ENCODE measurements at regions of chr22 and their contacts with region 1.

Region 1: DNA sequence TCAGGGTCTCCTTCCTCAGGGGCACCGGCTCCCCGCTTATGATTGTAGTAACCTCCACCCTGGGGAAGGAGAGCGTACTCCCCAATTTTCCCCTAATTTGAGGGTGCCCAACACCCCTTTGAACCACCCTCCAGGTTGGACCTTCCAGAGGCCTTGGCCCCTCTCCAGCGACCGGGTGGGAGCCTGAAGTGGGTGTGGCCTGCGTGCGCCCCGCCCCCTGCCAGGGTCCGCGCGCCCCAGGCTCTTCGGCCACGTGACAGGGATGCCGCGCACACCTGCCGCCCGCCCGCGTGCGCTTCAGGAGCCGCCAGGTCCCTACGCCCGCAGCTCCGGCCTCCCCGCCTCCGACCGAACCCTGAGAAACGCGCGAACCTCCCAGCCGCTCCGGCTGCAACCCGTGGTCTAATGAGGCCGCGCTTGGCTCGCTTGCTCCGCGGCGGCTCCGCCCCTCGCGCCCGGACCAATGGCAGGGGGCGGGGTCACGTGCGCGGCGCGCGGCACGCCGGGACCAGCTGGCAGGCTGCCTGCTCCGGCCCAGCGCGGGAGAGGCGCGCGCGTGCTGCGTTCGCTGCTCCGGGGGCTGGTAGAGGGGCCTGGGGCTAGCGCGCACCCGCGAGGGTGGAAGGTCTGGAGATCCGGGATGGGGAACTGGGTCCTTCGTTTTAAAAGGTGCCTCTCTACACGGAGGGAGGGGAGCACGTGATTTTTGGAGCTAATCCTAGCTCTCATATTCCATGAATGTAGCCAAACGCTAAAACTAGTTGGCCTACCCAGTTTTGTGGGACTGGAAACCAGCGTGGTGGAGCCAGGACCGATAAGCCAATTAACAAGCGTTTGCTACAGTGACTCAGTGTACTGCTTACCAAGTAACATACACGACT is at the start of gene FOXRED2:
- DNase-seq: peak; percentile 78 to 96 (median 86)
- ATAC-seq: peak; percentile 96
- H3K4me3 ChIP-seq: peak within 1 kb of the TSS; percentile 56
- H3K4me3 Mint-ChIP-seq: peak within 1 kb of the TSS; percentile 73
- H3K27ac ChIP-seq: peak within 1 kb of the TSS; percentile 18 to 48
- H3K27ac Mint-ChIP-seq: peak within 1 kb of the TSS; percentile 18
- H3K4me1 ChIP-seq: peaks cover 15% of the 10 kb centered on the region
- H3K4me1 Mint-ChIP-seq: peaks cover 12% of the 10 kb centered on the region
- H3K27me3 ChIP-seq: no peaks in the 10 kb centered on the region
- H3K27me3 Mint-ChIP-seq: no peaks in the 10 kb centered on the region
- CTCF ChIP-seq: no peak
- total RNA-seq, gene FOXRED2: 1.8 to 2.3 TPM

Region 2: DNA sequence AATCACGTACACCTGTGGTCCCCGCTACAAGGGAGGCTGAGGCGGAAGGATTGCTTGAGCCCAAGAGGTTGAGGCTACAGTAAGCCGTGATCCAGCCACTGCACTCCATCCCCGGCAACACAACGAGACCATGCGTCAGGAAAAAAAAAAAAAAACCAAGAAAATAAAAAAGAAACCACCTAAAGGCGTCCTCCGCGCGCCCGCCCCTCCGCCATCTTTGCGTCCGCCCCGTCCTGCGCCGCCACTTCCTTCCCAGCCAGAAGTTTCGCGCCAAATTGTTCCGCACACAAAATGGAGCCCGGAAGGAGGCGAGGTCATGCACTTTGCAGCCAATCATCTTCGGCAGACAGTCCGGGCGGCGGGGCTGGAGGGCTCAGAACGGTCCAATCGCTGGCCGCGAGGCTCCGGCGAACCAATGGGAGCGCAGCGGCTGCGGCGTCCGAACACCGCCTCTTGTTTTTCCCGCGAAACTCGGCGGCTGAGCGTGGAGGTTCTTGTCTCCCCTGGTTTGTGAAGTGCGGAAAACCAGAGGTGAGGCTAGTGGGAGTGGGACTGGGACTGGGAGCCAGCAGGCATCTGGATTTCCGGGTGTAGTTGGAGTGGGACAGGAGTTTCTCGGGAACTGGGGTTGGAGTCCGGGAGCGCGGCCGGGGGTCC is 1107.1 kb before region 1 on chr22 and contains the start of gene MCM5:
- CTCF ChIA-PET with region 1: no interaction called
- POLR2A ChIA-PET with region 1: no interaction called
- intact Hi-C with region 1: loop called in 1 of 2 experiments (anchors 5 kb)
- DNase-seq: peak; percentile 94 to 99 (median 96)
- ATAC-seq: peak; percentile 98
- H3K4me3 ChIP-seq: peak within 1 kb of the TSS; percentile 87
- H3K4me3 Mint-ChIP-seq: peak within 1 kb of the TSS; percentile 98
- H3K27ac ChIP-seq: peak within 1 kb of the TSS; percentile 12 to 69
- H3K27ac Mint-ChIP-seq: peak within 1 kb of the TSS; percentile 95
- H3K4me1 ChIP-seq: peaks cover 34% of the 10 kb centered on the region
- H3K4me1 Mint-ChIP-seq: peaks cover 18% of the 10 kb centered on the region
- H3K27me3 ChIP-seq: no peaks in the 10 kb centered on the region
- H3K27me3 Mint-ChIP-seq: no peaks in the 10 kb centered on the region
- CTCF ChIP-seq: no peak
- total RNA-seq, gene MCM5: 21.6 to 22.6 TPM

Region 3: DNA sequence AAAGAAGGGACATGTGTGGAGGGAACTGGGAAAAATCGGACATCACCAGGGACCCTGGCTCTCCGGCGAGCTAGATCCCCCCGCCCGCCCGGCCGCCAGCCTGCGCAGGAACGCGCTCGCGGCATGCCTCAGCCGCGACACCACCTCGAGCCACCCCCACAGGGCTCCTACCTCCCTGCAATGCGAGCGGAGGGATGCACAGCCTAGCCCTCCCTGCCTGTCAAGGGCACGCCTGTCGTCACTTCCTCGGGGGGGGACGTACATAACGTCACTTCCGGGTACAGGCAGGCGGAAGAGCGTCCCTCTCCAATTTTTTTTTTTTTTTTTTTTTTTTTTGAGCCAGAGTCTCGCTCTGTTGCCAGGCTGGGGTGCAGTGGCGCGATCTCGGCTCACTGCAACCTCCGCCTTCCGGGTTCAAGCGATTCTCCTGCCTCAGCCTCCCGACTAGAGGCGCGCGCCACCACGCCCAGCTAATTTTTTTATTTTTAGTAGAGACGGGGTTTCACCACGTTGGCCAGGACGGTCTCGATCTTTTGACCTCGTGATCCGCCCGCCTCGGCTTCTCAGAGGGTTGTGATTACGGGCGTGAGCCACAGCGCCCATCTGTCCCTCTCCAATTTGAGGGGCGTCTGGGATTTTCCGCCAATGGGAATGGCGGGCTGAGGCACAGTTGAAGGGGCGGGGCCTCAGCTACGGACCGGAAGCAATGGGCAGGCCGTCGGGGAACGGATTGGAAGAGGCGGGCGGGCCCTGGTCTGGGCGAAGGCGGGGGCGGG is 25.3 kb before region 1 on chr22 and contains the start of gene TXN2:
- CTCF ChIA-PET with region 1: interaction called, 3 read pairs
- POLR2A ChIA-PET with region 1: interaction called, 13 read pairs
- intact Hi-C with region 1: loop called in 1 of 2 experiments (anchors 2 kb)
- DNase-seq: peak; percentile 92 to 98 (median 96)
- ATAC-seq: peak; percentile 87
- H3K4me3 ChIP-seq: peak within 1 kb of the TSS; percentile 67
- H3K4me3 Mint-ChIP-seq: peak within 1 kb of the TSS; percentile 95
- H3K27ac ChIP-seq: peak within 1 kb of the TSS; percentile 94 to 99
- H3K27ac Mint-ChIP-seq: peak within 1 kb of the TSS; percentile 92
- H3K4me1 ChIP-seq: peaks cover 22% of the 10 kb centered on the region
- H3K4me1 Mint-ChIP-seq: peaks cover 22% of the 10 kb centered on the region
- H3K27me3 ChIP-seq: no peaks in the 10 kb centered on the region
- H3K27me3 Mint-ChIP-seq: no peaks in the 10 kb centered on the region
- CTCF ChIP-seq: no peak
- total RNA-seq, gene TXN2: 26.4 to 26.5 TPM